B cell (primary cell): ENCODE measurements at regions of chr1 and their contacts with region 1.

Region 1: GRCh38 chr1:167553136-167554027 is at the start of gene CREG1:
- DNase-seq: peak; percentile 92
- ATAC-seq: peak; percentile 98
- H3K4me3 ChIP-seq: peak within 1 kb of the TSS; percentile 56 to 82 (median 68)
- H3K4me3 Mint-ChIP-seq: peak within 1 kb of the TSS; percentile 96
- H3K27ac ChIP-seq: no peak within 1 kb of the TSS
- H3K27ac Mint-ChIP-seq: peak within 1 kb of the TSS; percentile 82
- H3K4me1 ChIP-seq: peaks cover 10 to 23% of the 10 kb centered on the region in 2 donors
- H3K4me1 Mint-ChIP-seq: peaks cover 23% of the 10 kb centered on the region
- H3K27me3 ChIP-seq: no peaks in the 10 kb centered on the region
- H3K27me3 Mint-ChIP-seq: no peaks in the 10 kb centered on the region
- CTCF ChIP-seq: no peak
- total RNA-seq, gene CREG1: 8.1 and 8.4 TPM in 2 replicates

Region 2: DNA sequence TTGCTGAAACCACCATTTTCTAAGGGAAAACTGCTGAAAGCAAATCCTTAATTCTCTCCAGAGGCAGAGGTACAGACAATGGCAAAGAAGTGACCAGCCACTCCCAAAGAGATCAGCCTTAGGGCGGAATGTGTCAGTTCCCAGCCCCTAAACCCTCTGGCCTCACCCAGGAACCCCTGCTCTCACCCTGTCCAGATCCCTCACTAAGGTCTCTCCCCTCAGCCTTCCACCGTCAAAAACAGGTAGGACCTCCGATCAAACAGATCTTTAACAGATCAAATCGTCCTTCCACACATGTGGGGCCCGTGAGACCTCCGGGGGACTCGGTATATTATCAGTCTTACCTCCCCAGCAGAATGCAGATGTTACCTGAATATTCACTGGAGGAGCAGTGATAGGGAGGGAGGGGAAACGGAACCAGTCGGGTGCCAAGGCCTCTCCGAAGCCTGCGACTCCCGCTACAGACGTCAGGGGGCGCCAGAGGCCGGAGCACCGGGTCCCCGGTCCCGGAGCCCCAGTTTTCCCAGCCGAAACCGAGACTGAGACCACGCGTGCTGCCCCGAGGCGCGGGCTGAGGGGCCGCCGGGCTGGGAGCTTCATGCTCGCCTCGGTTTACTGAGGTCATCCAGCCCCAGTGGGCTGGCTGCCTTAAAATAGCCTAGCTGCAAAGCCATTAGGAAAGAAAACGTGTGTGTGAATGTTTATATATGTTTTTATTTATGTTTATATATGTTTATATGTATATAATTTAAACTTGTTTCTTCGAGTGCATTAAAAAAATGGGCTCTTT is 486.9 kb before region 1 on chr1:
- CTCF ChIA-PET with region 1: interaction called, 6 read pairs
- POLR2A ChIA-PET with region 1: interaction called, 3 read pairs
- intact Hi-C with region 1: loop called (anchors 1 kb)
- DNase-seq: peak; percentile 83
- ATAC-seq: peak; percentile 99
- H3K4me3 ChIP-seq: peak overlapping the region in 1 of 5 experiments; percentile 20
- H3K4me3 Mint-ChIP-seq: no peak overlapping the region
- H3K27ac ChIP-seq: no peak overlapping the region
- H3K27ac Mint-ChIP-seq: no peak overlapping the region
- H3K4me1 ChIP-seq: peaks cover 0 to 7% of the 10 kb centered on the region in 2 donors
- H3K4me1 Mint-ChIP-seq: peaks cover 4% of the 10 kb centered on the region
- H3K27me3 ChIP-seq: no peaks in the 10 kb centered on the region
- H3K27me3 Mint-ChIP-seq: no peaks in the 10 kb centered on the region
- CTCF ChIP-seq: peak; percentile 98

Region 3: GRCh38 chr1:167499664-167500101 is 53.7 kb before region 1 on chr1:
- CTCF ChIA-PET with region 1: no interaction called
- POLR2A ChIA-PET with region 1: no interaction called
- intact Hi-C with region 1: loop called (anchors 2 kb)
- DNase-seq: peak; percentile 88
- ATAC-seq: peak; percentile 98
- H3K4me3 ChIP-seq: peak overlapping the region in 1 of 5 experiments; percentile 34
- H3K4me3 Mint-ChIP-seq: peak overlapping the region; percentile 68
- H3K27ac ChIP-seq: no peak overlapping the region
- H3K27ac Mint-ChIP-seq: peak overlapping the region; percentile 18
- H3K4me1 ChIP-seq: peaks cover 39% of the 10 kb centered on the region in 2 donors
- H3K4me1 Mint-ChIP-seq: peaks cover 39% of the 10 kb centered on the region
- H3K27me3 ChIP-seq: peaks cover 0 to 66% (median 55%) of the 10 kb centered on the region in 4 experiments
- H3K27me3 Mint-ChIP-seq: peaks cover 75% of the 10 kb centered on the region
- CTCF ChIP-seq: no peak

Region 4: DNA sequence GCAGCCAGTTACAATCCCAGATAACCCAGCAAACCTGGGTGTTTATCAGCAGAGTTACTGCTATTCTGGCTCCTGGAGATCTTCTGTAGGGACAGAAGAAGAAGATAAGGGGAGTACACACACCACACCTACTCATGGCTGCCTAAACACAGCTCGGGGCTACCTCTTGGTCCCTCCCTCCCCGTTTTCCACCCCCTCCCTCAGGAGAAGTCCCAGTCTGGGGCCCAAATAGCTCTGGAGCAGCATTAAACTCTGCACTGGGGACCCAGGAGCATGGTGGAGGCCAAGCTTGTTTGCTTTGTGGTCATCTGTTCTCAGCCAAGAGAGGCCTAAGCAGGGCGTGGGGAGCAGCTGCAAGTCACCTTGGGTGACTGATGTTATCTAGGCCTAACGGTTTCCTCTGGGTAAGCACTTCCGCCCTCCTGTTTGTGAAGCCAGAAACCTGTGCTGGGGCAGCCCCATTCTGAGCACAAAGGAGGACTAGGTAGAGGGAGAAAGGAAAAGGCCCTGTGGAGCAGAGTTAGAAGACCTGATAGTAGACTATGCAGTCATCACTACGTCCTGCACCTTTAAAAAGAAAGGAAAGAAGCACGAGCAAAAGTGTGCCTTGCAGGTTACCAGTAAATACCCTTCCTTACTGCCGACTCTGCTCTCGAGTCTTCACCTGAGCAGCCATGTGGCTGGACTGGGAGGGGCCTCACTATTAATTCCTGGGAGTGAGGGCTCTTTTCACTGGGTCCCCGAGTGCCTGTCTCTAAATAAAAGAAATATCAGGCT is 74.7 kb after region 1 on chr1:
- CTCF ChIA-PET with region 1: no interaction called
- POLR2A ChIA-PET with region 1: interaction called, 3 read pairs
- intact Hi-C with region 1: loop called (anchors 1 kb)
- DNase-seq: peak; percentile 82
- ATAC-seq: peak; percentile 64
- H3K4me3 ChIP-seq: peak overlapping the region in 3 of 5 experiments; percentile 1 to 98 (median 16)
- H3K4me3 Mint-ChIP-seq: peak overlapping the region; percentile 92
- H3K27ac ChIP-seq: peak overlapping the region; percentile 93 to 98
- H3K27ac Mint-ChIP-seq: peak overlapping the region; percentile 93
- H3K4me1 ChIP-seq: peaks cover 71 to 72% of the 10 kb centered on the region in 2 donors
- H3K4me1 Mint-ChIP-seq: peaks cover 66% of the 10 kb centered on the region
- H3K27me3 ChIP-seq: no peaks in the 10 kb centered on the region
- H3K27me3 Mint-ChIP-seq: no peaks in the 10 kb centered on the region
- CTCF ChIP-seq: no peak